ENCODE measurements at regions of chr6 and their contacts with region 1.

Region 1: GRCh38 chr6:119129148-119129967 is 50.9 kb upstream of the FAM184A start:
- DNase-seq: peak; percentile 42 to 50
- H3K4me3 ChIP-seq: no peak overlapping the region
- H3K4me1 ChIP-seq: peaks cover 16% of the 10 kb centered on the region
- H3K27me3 ChIP-seq: no peaks in the 10 kb centered on the region

Region 2: DNA sequence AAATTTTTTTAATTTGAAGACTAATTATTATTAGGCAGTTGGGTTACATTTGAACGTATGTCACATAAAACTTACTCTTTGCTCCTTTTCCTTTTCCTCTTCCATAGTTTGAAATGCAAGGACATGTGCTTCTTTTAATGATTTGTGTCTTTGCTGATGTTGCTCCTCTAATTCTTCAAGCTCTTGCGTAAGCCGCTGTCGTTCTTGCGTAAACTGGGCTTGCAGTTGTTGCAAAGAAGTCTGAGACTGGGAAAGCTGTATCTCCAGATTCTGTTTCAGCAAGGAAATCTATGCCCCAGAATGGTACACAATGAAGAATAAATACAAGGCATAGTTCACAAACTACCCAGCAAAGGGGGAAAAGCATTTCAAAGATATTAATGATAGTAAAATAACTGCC is 149.3 kb before region 1 on chr6:
- in situ Hi-C with region 1: no loop called
- DNase-seq: no peak
- H3K4me3 ChIP-seq: no peak overlapping the region
- H3K4me1 ChIP-seq: peaks cover 10% of the 10 kb centered on the region
- H3K27me3 ChIP-seq: no peaks in the 10 kb centered on the region

Region 3: DNA sequence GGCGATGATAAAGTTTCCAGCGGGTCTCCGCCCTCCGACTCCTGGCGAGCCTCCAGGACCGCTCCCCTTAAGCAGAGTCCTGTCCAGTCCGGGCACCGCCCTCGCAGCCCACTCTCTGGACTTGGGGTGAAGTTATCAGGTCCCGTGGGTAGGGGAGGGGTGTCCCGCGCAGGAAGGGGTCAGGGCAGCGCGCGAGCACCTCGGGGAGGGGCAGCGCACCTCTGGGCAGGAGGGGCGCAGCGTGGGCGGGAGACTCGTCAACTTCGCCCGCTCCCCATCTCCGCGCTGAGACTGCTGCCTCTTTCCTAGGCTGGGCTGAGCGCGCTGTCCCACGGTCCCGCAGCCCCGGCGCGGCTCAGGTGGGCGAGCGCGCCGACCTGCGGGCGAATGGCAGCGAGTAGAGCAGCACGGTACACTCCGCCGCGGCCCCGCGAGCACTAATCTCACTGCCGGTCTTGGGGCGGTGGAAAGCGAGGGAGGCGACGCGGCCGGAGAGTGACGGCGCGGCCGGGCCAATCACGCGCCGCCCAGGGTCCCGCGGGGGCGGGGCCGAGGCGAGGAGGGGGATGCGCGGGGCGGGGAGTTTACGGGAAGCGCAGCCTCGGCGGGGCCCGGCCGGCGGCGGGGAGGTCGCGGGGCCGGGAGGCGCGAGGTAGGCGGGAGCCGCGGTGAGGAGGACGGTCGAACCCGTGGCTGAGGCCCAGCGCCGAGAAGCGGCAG is 220.1 kb after region 1 on chr6 and contains the start of gene MAN1A1:
- in situ Hi-C with region 1: loop called (anchors 25 kb)
- DNase-seq: peak; percentile 83 to 92
- H3K4me3 ChIP-seq: peak within 1 kb of the TSS; percentile 77
- H3K4me1 ChIP-seq: peaks cover 30% of the 10 kb centered on the region
- H3K27me3 ChIP-seq: no peaks in the 10 kb centered on the region

Region 4: DNA sequence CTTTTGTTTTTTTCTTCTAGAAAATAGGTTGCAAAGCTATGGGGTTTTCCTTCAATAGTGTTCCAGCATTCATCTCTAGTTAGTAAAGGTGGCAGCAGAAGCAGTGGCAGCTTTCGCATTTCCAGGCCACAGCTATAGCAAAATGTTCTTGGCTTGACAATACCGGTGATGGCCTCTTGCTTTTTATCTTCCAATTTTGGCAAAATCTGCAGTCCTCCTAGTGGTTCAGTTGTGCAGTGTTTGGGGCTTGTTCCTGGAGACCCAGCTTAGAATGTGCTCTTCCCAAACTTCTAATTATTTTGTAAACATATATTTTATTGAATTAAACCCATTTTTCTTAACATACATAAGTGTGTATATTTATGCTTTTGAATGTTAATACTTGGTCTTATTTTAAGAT is 590.8 kb after region 1 on chr6:
- in situ Hi-C with region 1: loop called (anchors 25 kb)
- DNase-seq: no peak
- H3K4me3 ChIP-seq: no peak overlapping the region
- H3K4me1 ChIP-seq: no peaks in the 10 kb centered on the region
- H3K27me3 ChIP-seq: no peaks in the 10 kb centered on the region